ENCODE measurements at regions of chr5 and their contacts with region 1.

Region 1: GRCh38 chr5:81851481-81852178 is 100.7 kb upstream of the SSBP2 start:
- DNase-seq: peak; percentile 94 to 99 (median 98)

Region 2: DNA sequence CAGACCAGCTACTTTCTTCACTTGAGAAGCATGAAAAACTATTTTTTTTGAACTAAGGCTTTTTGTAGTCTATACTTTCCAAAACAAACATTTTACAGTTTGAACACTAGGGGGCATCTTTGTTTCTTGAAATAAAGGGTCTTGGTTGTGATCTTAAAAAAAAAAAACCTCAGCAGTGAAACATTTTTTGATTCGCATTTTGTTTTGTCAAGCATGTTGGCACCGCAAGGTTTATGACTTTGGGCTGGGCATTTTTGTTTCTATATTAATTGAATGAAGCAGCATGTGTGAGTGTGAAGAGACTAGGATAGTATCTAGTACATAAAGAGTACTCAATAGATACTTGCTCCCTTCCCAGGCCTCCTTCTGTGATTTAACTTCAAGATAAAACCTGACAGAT is 426.1 kb before region 1 on chr5:
- intact Hi-C with region 1: loop called (anchors 10 kb)
- DNase-seq: peak in 1 of 42 donors; percentile 13

Region 3: GRCh38 chr5:81506900-81507588 is 344.6 kb before region 1 on chr5:
- intact Hi-C with region 1: loop called (anchors 5 kb)
- DNase-seq: peak in 36 of 42 donors; percentile 13 to 88 (median 61)

Region 4: GRCh38 chr5:81787474-81788242 is 64.0 kb before region 1 on chr5:
- intact Hi-C with region 1: loop called (anchors 2 kb)
- DNase-seq: peak in 31 of 42 donors; percentile 19 to 78 (median 53)

Region 5: DNA sequence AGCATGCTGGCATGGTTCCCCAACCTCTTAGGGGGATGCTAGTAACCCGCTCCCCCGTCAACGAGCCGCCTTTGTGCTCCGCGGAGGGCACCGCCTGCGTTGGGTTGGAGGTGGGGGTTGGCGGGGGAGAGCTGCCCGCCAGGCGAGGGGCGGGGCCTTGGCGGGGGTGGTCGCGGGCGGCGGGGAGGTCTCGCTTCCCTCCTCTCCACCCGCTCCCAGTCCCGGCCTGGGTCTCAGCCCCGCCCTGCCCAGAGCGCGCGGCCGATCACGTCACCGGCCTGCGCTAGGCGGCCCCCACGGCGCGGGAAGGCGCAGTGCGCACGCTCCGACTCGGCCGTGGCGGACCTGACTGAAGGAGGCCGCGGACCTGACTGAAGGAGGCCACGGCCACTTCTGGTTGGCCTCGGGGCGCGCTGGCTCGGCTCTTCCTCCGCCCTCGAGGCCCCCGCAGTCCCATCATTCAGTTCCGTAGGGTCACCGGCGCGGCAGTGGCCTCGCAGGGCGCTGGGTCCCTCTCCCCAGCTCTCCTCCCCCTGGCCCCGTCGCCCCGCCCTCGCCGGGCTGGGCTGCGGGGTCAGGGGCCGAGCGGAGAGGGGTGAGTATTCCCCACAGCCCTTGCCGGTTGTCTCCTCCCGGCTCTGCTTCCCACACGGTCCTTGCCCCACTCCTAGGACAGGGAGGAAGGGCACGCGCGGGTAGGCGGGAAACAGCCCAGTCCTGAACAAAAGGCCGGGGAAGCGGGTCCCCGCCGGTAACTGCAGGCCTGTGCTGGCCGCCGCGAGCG is 120.3 kb after region 1 on chr5 and contains the start of gene ATG10:
- intact Hi-C with region 1: loop called (anchors 5 kb)
- DNase-seq: peak; percentile 77 to 98 (median 95)